ENCODE measurements at regions of chr13 and their contacts with region 1.

Region 1: GRCh38 chr13:99606324-99607066 is 105.2 kb downstream of the TM9SF2 start:
- DNase-seq: peak; percentile 80 to 95 (median 87)
- ATAC-seq: peak; percentile 97
- H3K4me3 ChIP-seq: peak within 1 kb of the TSS; percentile 76
- H3K4me3 Mint-ChIP-seq: peak within 1 kb of the TSS; percentile 84 to 93 (median 92)
- H3K27ac ChIP-seq: peak within 1 kb of the TSS; percentile 83
- H3K27ac Mint-ChIP-seq: peak within 1 kb of the TSS; percentile 88 to 96 (median 93)
- H3K4me1 ChIP-seq: peaks cover 9 to 17% of the 10 kb centered on the region in 2 donors
- H3K4me1 Mint-ChIP-seq: peaks cover 28 to 69% (median 54%) of the 10 kb centered on the region in 7 donors
- H3K27me3 ChIP-seq: no peaks in the 10 kb centered on the region
- H3K27me3 Mint-ChIP-seq: peaks cover 0 to 11% (median 0%) of the 10 kb centered on the region in 5 donors

Region 2: GRCh38 chr13:99214232-99214631 is 392.3 kb before region 1 on chr13:
- CTCF ChIA-PET with region 1: no interaction called
- POLR2A ChIA-PET with region 1: no interaction called
- intact Hi-C with region 1: loop called in 1 of 2 experiments (anchors 10 kb)
- DNase-seq: peak in 4 of 9 donors; percentile 34 to 53 (median 46)
- ATAC-seq: no peak
- H3K4me3 ChIP-seq: peak overlapping the region; percentile 53
- H3K4me3 Mint-ChIP-seq: peak overlapping the region; percentile 69 to 95 (median 92)
- H3K27ac ChIP-seq: peak overlapping the region; percentile 85
- H3K27ac Mint-ChIP-seq: peak overlapping the region; percentile 94 to 100 (median 99)
- H3K4me1 ChIP-seq: peaks cover 46 to 67% of the 10 kb centered on the region in 2 donors
- H3K4me1 Mint-ChIP-seq: peaks cover 49 to 93% (median 79%) of the 10 kb centered on the region in 7 donors
- H3K27me3 ChIP-seq: no peaks in the 10 kb centered on the region
- H3K27me3 Mint-ChIP-seq: no peaks in the 10 kb centered on the region

Region 3: GRCh38 chr13:99307648-99308339 is 298.7 kb before region 1 on chr13:
- CTCF ChIA-PET with region 1: no interaction called
- POLR2A ChIA-PET with region 1: no interaction called
- intact Hi-C with region 1: loop called in 1 of 2 experiments (anchors 10 kb)
- DNase-seq: peak in 2 of 9 donors; percentile 44 to 69
- ATAC-seq: peak; percentile 40
- H3K4me3 ChIP-seq: peak overlapping the region; percentile 89
- H3K4me3 Mint-ChIP-seq: peak overlapping the region; percentile 89 to 100 (median 94)
- H3K27ac ChIP-seq: peak overlapping the region; percentile 88
- H3K27ac Mint-ChIP-seq: peak overlapping the region; percentile 81 to 99 (median 95)
- H3K4me1 ChIP-seq: peaks cover 49 to 50% of the 10 kb centered on the region in 2 donors
- H3K4me1 Mint-ChIP-seq: peaks cover 56 to 84% (median 77%) of the 10 kb centered on the region in 7 donors
- H3K27me3 ChIP-seq: no peaks in the 10 kb centered on the region
- H3K27me3 Mint-ChIP-seq: no peaks in the 10 kb centered on the region

Region 4: GRCh38 chr13:99577934-99578917 is 28.3 kb before region 1 on chr13:
- CTCF ChIA-PET with region 1: interaction called, 3 read pairs
- POLR2A ChIA-PET with region 1: interaction called, 5 read pairs
- intact Hi-C with region 1: loop called in 1 of 2 experiments (anchors 2 kb)
- DNase-seq: no peak
- ATAC-seq: no peak
- H3K4me3 ChIP-seq: no peak overlapping the region
- H3K4me3 Mint-ChIP-seq: no peak overlapping the region
- H3K27ac ChIP-seq: no peak overlapping the region
- H3K27ac Mint-ChIP-seq: peak overlapping the region in 3 of 9 donors; percentile 21 to 79 (median 37)
- H3K4me1 ChIP-seq: no peaks in the 10 kb centered on the region
- H3K4me1 Mint-ChIP-seq: peaks cover 0 to 13% (median 2%) of the 10 kb centered on the region in 7 donors
- H3K27me3 ChIP-seq: no peaks in the 10 kb centered on the region
- H3K27me3 Mint-ChIP-seq: peaks cover 0 to 2% (median 0%) of the 10 kb centered on the region in 5 donors

Region 5: GRCh38 chr13:100235311-100235901 is 628.9 kb after region 1 on chr13:
- CTCF ChIA-PET with region 1: no interaction called
- POLR2A ChIA-PET with region 1: no interaction called
- intact Hi-C with region 1: loop called in 1 of 2 experiments (anchors 1 kb)
- DNase-seq: peak in 7 of 9 donors; percentile 11 to 54 (median 40)
- ATAC-seq: peak; percentile 57
- H3K4me3 ChIP-seq: no peak overlapping the region
- H3K4me3 Mint-ChIP-seq: peak overlapping the region in 1 of 10 donors; percentile 30
- H3K27ac ChIP-seq: no peak overlapping the region
- H3K27ac Mint-ChIP-seq: no peak overlapping the region
- H3K4me1 ChIP-seq: peaks cover 0 to 5% of the 10 kb centered on the region in 2 donors
- H3K4me1 Mint-ChIP-seq: peaks cover 3 to 8% (median 5%) of the 10 kb centered on the region in 7 donors
- H3K27me3 ChIP-seq: no peaks in the 10 kb centered on the region
- H3K27me3 Mint-ChIP-seq: peaks cover 0 to 3% (median 0%) of the 10 kb centered on the region in 5 donors

Measured in naive thymus-derived CD4-positive, alpha-beta T cell (primary cell).